Breast epithelium (tissue), 4 donors: ENCODE measurements at regions of chr1 and their contacts with region 1.

Region 1: GRCh38 chr1:182643706-182644105 is 39.5 kb upstream of the RGS16 start:
- DNase-seq: no peak
- H3K4me3 ChIP-seq: no peak overlapping the region
- H3K27ac ChIP-seq: no peak overlapping the region
- H3K4me1 ChIP-seq: no peaks in the 10 kb centered on the region
- H3K27me3 ChIP-seq: no peaks in the 10 kb centered on the region
- CTCF ChIP-seq: no peak
- POLR2A ChIP-seq: no peak

Region 2: DNA sequence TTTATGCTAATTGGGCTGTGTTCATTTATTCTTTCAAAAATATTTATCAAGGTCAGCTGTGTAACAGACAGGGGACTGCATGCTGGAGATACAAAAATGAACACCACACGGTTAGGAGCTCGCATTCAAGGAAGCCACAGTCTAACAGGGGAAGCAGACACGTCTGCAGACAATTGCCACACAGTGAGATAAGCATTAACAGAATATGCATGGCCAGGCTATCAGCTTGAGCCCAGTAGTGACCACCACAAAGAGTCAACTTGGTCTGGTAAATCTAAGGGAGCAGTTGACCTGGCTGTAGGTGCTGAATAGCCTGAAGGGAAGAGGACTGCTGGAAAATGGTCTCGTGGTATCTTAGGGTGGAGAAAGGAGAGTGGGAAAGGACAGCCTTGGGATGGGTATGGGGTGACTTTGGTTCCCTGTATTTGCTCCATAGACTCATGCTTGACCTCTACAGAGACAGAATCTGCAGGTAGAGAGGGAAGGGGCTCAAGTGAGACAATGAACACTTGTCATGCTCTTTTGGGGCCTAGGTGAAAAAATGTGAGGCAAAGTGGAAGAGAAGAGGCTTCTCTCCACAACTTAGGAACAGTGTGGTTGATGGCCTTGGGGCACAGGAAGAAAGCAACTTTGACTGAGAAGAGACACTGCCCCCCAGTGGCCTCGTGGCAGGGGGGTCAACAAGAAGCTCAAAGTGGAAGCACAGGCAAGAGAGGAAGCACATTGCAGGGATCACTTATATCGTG is 138.3 kb after region 1 on chr1:
- intact Hi-C with region 1: no loop called
- DNase-seq: peak; percentile 48 to 65
- H3K4me3 ChIP-seq: no peak overlapping the region
- H3K27ac ChIP-seq: no peak overlapping the region
- H3K4me1 ChIP-seq: no peaks in the 10 kb centered on the region
- H3K27me3 ChIP-seq: no peaks in the 10 kb centered on the region
- CTCF ChIP-seq: peak; percentile 25 to 45 (median 34)
- POLR2A ChIP-seq: no peak

Region 3: DNA sequence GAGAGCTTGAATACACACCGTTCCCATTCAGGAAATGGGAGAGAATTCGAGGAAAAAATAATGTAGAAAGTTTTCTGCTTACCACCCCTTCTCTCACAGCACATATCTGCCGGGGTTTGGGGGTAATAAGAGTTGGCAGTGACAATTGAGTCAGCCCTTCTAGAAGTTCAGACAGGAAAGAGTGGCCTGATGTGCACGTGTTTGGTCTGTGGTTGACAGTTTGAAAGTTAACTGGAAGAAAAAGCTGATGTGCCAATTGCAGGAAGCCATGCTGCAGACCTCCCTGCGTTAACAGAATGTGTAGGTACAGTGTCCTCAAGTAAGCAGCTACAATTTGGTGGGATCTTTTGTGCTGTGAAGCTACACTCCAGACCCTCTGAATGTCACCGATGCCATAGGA is 246.3 kb after region 1 on chr1:
- intact Hi-C with region 1: loop called (anchors 5 kb)
- DNase-seq: no peak
- H3K4me3 ChIP-seq: no peak overlapping the region
- H3K27ac ChIP-seq: no peak overlapping the region
- H3K4me1 ChIP-seq: no peaks in the 10 kb centered on the region
- H3K27me3 ChIP-seq: no peaks in the 10 kb centered on the region
- CTCF ChIP-seq: no peak
- POLR2A ChIP-seq: no peak